ENCODE measurements at regions of chr12 and their contacts with region 1.

Region 1: GRCh38 chr12:39272871-39273770 is 169.8 kb downstream of the KIF21A start:
- DNase-seq: peak; percentile 67
- H3K4me3 Mint-ChIP-seq: no peak overlapping the region
- H3K27ac Mint-ChIP-seq: no peak overlapping the region
- H3K4me1 Mint-ChIP-seq: peaks cover 8% of the 10 kb centered on the region
- H3K27me3 Mint-ChIP-seq: no peaks in the 10 kb centered on the region
- CTCF ChIP-seq: peak; percentile 61

Region 2: DNA sequence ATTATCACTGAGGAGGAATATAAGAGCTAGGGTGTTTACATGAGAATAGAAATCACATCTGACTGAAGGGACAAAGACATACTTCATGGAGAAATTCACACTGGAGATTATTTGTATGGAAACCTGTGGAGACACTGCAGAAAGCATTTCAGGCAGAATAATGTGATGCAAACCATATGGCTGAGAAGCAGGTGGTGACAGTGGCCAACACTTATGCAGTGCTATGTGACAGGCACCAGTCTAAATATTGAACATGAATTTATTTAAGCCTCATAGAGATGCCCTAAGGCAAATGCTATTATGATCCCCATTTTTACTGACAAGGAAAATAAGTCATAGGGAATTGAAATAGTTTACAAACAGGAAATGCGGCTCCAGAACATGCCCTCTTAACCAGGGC is 940.3 kb before region 1 on chr12:
- CTCF ChIA-PET with region 1: interaction called, 25 read pairs
- POLR2A ChIA-PET with region 1: interaction called, 3 read pairs
- intact Hi-C with region 1: loop called (anchors 2 kb)
- DNase-seq: no peak
- H3K4me3 Mint-ChIP-seq: no peak overlapping the region
- H3K27ac Mint-ChIP-seq: no peak overlapping the region
- H3K4me1 Mint-ChIP-seq: no peaks in the 10 kb centered on the region
- H3K27me3 Mint-ChIP-seq: no peaks in the 10 kb centered on the region
- CTCF ChIP-seq: no peak

Region 3: GRCh38 chr12:38921025-38921677 is 352.0 kb before region 1 on chr12:
- CTCF ChIA-PET with region 1: interaction called, 55 read pairs
- POLR2A ChIA-PET with region 1: interaction called, 5 read pairs
- intact Hi-C with region 1: loop called (anchors 1 kb)
- DNase-seq: peak; percentile 84
- H3K4me3 Mint-ChIP-seq: no peak overlapping the region
- H3K27ac Mint-ChIP-seq: no peak overlapping the region
- H3K4me1 Mint-ChIP-seq: peaks cover 7% of the 10 kb centered on the region
- H3K27me3 Mint-ChIP-seq: no peaks in the 10 kb centered on the region
- CTCF ChIP-seq: peak; percentile 71

Region 4: GRCh38 chr12:39127401-39127800 is 145.7 kb before region 1 on chr12:
- CTCF ChIA-PET with region 1: interaction called, 18 read pairs
- POLR2A ChIA-PET with region 1: no interaction called
- intact Hi-C with region 1: no loop called
- DNase-seq: peak; percentile 88
- H3K4me3 Mint-ChIP-seq: no peak overlapping the region
- H3K27ac Mint-ChIP-seq: no peak overlapping the region
- H3K4me1 Mint-ChIP-seq: peaks cover 7% of the 10 kb centered on the region
- H3K27me3 Mint-ChIP-seq: no peaks in the 10 kb centered on the region
- CTCF ChIP-seq: no peak

Region 5: DNA sequence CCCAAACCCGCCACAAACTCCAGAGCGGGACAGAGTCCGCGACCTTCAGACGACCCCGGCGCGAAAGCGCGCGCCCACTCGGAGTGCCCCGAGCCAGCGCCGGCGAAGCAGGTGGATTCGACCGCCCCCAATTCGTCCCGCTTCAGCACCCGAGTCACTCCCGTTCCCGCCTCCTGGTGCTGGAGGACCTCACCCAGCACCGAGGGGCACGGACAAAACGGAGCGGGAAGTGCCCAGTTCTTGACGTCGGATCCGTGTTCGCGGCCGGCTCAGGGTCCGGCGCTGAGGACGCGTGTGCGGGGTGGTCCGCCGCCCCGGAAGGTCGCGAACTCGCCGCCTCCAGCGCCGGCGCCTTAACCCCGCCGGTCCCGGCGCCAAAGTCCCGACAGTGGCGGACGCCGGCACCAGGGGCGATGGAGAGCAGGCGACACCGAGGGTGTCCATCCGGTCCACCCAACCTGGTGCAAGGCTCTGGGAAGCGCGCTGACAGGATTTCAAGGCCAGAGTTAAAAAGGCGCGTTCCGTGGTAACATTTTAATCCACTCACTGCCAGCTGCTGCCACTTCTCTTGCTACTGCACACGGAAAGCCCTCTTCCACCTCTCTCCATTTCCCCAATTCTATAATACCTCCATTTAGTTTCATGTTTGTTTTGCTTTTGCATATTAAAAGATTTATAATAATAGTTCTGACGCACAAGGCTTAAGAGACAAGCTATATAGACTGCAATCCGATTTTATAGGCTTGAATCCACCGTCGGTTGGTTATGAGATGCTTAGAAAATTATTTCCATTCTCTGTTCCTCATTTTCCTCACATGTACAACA is 127.7 kb before region 1 on chr12:
- CTCF ChIA-PET with region 1: interaction called, 19 read pairs
- POLR2A ChIA-PET with region 1: no interaction called
- intact Hi-C with region 1: loop called (anchors 1 kb)
- DNase-seq: peak; percentile 52
- H3K4me3 Mint-ChIP-seq: peak overlapping the region; percentile 61
- H3K27ac Mint-ChIP-seq: no peak overlapping the region
- H3K4me1 Mint-ChIP-seq: no peaks in the 10 kb centered on the region
- H3K27me3 Mint-ChIP-seq: no peaks in the 10 kb centered on the region
- CTCF ChIP-seq: peak; percentile 57

Region 6: GRCh38 chr12:39287409-39287808 is 14.3 kb after region 1 on chr12:
- CTCF ChIA-PET with region 1: interaction called, 13 read pairs
- POLR2A ChIA-PET with region 1: no interaction called
- intact Hi-C with region 1: no loop called
- DNase-seq: no peak
- H3K4me3 Mint-ChIP-seq: no peak overlapping the region
- H3K27ac Mint-ChIP-seq: no peak overlapping the region
- H3K4me1 Mint-ChIP-seq: no peaks in the 10 kb centered on the region
- H3K27me3 Mint-ChIP-seq: no peaks in the 10 kb centered on the region
- CTCF ChIP-seq: no peak

Region 7: GRCh38 chr12:39329018-39329417 is 55.9 kb after region 1 on chr12:
- CTCF ChIA-PET with region 1: no interaction called
- POLR2A ChIA-PET with region 1: no interaction called
- intact Hi-C with region 1: no loop called
- DNase-seq: peak; percentile 32
- H3K4me3 Mint-ChIP-seq: no peak overlapping the region
- H3K27ac Mint-ChIP-seq: peak overlapping the region; percentile 29
- H3K4me1 Mint-ChIP-seq: peaks cover 10% of the 10 kb centered on the region
- H3K27me3 Mint-ChIP-seq: no peaks in the 10 kb centered on the region
- CTCF ChIP-seq: no peak

Region 8: DNA sequence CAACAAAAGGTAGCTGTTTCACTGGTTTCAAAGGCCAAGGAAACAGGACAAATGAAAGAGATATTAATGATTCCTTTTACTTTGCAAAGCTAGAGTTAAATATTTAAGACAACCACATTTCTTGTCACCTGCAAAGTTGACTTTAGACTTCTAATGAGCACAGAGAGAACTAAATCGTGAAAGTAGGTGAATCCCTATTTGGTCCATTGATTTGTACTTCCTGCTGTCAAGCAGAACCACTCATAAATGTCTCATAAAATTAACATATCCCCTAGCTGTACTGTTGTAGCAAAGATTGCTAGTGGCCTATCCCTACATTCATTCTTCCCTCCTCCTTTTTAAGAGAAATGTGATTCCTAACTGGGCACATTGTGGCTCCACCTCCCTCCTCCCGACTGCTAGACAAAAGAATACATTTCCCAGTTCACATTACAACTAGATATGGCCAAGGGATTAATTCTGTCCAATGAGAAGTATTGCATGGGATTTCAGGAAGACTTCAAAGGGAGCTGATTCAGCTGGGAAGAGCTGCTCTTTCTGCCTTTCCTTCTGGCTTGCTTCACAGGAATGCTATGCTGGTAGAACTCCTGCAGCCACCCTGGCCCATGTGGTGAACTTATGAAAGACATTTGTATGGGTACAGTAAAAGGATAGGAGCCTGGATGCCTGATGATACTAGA is 574.0 kb after region 1 on chr12:
- CTCF ChIA-PET with region 1: no interaction called
- POLR2A ChIA-PET with region 1: no interaction called
- intact Hi-C with region 1: no loop called
- DNase-seq: peak; percentile 8
- H3K4me3 Mint-ChIP-seq: no peak overlapping the region
- H3K27ac Mint-ChIP-seq: no peak overlapping the region
- H3K4me1 Mint-ChIP-seq: no peaks in the 10 kb centered on the region
- H3K27me3 Mint-ChIP-seq: no peaks in the 10 kb centered on the region
- CTCF ChIP-seq: no peak